ENCODE measurements at regions of chr1 and their contacts with region 1.

Region 1: GRCh38 chr1:84753516-84754385 is 63.5 kb upstream of the SSX2IP start:
- DNase-seq: peak; percentile 81
- ATAC-seq: peak; percentile 98
- H3K4me3 ChIP-seq: no peak overlapping the region
- H3K27ac ChIP-seq: no peak overlapping the region
- H3K4me1 ChIP-seq: no peaks in the 10 kb centered on the region; the same call in 1 of the 2 replicates
- H3K27me3 ChIP-seq: peaks cover 4% of the 10 kb centered on the region; the same call in 1 of the 2 replicates
- CTCF ChIP-seq: peak; percentile 100

Region 2: DNA sequence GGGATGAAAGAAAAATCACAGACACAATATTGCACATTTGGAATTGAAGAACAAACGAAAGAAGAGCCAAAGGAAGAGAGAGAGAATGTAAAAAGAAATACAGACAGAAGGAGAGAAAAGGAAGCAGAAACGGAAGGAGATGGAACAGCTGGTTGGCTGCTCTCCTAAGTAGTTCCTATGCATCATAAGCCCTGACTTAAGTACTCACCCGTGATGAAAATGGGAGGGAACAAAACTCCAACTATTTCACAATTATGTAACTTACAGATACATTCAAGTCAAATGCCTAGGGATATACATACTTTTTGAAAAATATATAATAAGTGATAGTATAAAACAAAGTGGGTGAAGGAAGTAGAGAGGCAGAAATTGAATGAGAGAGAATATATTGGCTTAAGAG is 843.3 kb before region 1 on chr1:
- CTCF ChIA-PET with region 1: no interaction called
- POLR2A ChIA-PET with region 1: no interaction called
- in situ Hi-C with region 1: loop called (anchors 10 kb)
- intact Hi-C with region 1: no loop called
- DNase-seq: no peak
- ATAC-seq: no peak
- H3K4me3 ChIP-seq: no peak overlapping the region
- H3K27ac ChIP-seq: no peak overlapping the region
- H3K4me1 ChIP-seq: no peaks in the 10 kb centered on the region
- H3K27me3 ChIP-seq: no peaks in the 10 kb centered on the region
- CTCF ChIP-seq: no peak

Region 3: DNA sequence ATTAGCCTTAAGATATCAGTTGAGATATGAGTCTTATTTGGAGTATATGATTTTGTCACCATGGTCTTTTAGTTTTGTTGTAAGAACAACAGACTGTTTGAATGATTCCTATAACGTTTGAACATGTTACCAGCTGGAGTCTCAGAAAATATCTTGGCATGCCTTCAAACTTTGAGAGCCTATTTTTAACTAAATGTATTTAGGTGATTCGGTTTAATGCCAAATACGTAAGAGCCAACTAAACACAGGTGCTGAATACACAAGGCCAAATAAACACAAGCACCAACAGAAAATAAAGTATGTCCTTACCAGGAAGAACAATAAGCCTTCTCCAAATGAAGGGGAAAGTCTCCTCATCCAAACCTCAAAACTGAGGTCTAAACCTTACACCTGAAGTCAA is 561.1 kb before region 1 on chr1:
- CTCF ChIA-PET with region 1: no interaction called
- POLR2A ChIA-PET with region 1: no interaction called
- in situ Hi-C with region 1: no loop called
- intact Hi-C with region 1: no loop called
- DNase-seq: no peak
- ATAC-seq: no peak
- H3K4me3 ChIP-seq: no peak overlapping the region
- H3K27ac ChIP-seq: no peak overlapping the region
- H3K4me1 ChIP-seq: no peaks in the 10 kb centered on the region
- H3K27me3 ChIP-seq: no peaks in the 10 kb centered on the region
- CTCF ChIP-seq: no peak

Region 4: DNA sequence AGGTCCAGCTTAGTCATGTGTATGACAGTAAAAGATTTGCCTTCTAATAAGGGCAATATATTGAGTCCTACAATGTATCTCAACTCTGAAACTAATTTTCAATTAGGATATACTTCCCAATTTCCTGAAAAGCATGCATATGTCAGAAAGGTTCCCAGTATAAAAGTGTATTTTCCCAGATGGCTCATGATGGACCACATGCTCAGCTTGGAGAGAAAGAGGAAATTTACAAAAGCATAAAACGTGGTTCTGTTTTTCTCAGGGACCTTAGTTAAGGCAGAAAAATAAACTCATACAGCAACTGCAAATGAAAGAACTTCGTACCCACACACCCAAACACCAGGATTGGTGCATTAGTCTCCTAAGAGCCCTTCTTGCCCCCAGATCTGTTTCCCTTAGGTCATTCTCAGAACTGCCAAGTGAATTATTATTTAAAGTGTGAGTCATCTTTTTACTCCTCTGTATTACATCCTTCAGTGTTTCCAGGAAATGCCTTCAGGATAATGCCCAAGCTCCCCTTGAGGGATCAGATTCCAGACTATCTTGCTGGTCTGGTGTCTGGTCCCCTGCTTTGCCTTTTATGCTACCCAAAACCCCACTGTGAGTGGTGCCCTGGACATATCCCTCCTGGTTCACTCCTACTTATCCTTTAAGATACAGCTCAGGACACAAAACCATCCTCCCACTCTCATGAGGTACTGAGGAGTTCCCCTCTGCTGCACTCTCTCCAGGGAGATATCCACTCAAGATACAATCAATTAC is 120.9 kb before region 1 on chr1:
- CTCF ChIA-PET with region 1: no interaction called
- POLR2A ChIA-PET with region 1: no interaction called
- in situ Hi-C with region 1: no loop called
- intact Hi-C with region 1: loop called (anchors 5 kb)
- DNase-seq: peak; percentile 48
- ATAC-seq: peak; percentile 90
- H3K4me3 ChIP-seq: no peak overlapping the region
- H3K27ac ChIP-seq: no peak overlapping the region
- H3K4me1 ChIP-seq: peaks cover 16% of the 10 kb centered on the region
- H3K27me3 ChIP-seq: no peaks in the 10 kb centered on the region
- CTCF ChIP-seq: 0 out of 2 replicates have a peak, but pooled peaks have one; percentile 6

Region 5: DNA sequence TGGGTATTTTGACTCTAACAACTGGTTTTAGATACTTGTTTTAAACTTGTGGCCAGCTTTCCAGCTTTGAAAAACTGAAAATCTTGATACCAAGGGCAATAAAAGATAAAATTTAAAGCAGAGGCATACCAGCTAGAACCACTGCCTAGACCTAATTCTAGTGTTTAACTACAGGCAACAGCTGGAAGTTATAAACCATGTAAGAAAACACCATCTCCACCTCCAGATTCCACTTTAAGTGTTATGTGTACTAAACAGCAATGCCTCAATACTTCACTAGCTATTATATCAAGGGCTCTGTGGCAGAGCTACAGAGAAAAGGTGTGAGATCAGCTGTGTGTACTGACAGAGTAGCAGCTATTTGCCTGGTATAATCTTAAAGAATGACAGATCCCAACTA is 69.8 kb after region 1 on chr1:
- CTCF ChIA-PET with region 1: interaction called, 10 read pairs
- POLR2A ChIA-PET with region 1: interaction called, 3 read pairs
- in situ Hi-C with region 1: no loop called
- intact Hi-C with region 1: no loop called
- DNase-seq: no peak
- ATAC-seq: no peak
- H3K4me3 ChIP-seq: no peak overlapping the region
- H3K27ac ChIP-seq: no peak overlapping the region
- H3K4me1 ChIP-seq: no peaks in the 10 kb centered on the region
- H3K27me3 ChIP-seq: peaks cover 5% of the 10 kb centered on the region; the same call in 1 of the 2 replicates
- CTCF ChIP-seq: no peak